Calu3 (cell line): ENCODE measurements at regions of chr18 and their contacts with region 1.

Region 1: GRCh38 chr18:610214-610903 is 13.6 kb downstream of the CLUL1 start:
- DNase-seq: no peak
- H3K4me3 Mint-ChIP-seq: no peak overlapping the region
- H3K27ac Mint-ChIP-seq: no peak overlapping the region
- H3K4me1 Mint-ChIP-seq: no peaks in the 10 kb centered on the region
- H3K27me3 Mint-ChIP-seq: peaks cover 25% of the 10 kb centered on the region
- CTCF ChIP-seq: no peak

Region 2: GRCh38 chr18:484749-485464 is 125.5 kb before region 1 on chr18:
- CTCF ChIA-PET with region 1: no interaction called
- intact Hi-C with region 1: loop called (anchors 5 kb)
- DNase-seq: no peak
- H3K4me3 Mint-ChIP-seq: no peak overlapping the region
- H3K27ac Mint-ChIP-seq: no peak overlapping the region
- H3K4me1 Mint-ChIP-seq: peaks cover 40% of the 10 kb centered on the region
- H3K27me3 Mint-ChIP-seq: peaks cover 12% of the 10 kb centered on the region
- CTCF ChIP-seq: no peak

Region 3: GRCh38 chr18:574865-575645 is 35.3 kb before region 1 on chr18:
- CTCF ChIA-PET with region 1: no interaction called
- intact Hi-C with region 1: no loop called
- DNase-seq: no peak
- H3K4me3 Mint-ChIP-seq: no peak overlapping the region
- H3K27ac Mint-ChIP-seq: no peak overlapping the region
- H3K4me1 Mint-ChIP-seq: no peaks in the 10 kb centered on the region
- H3K27me3 Mint-ChIP-seq: peaks cover 63% of the 10 kb centered on the region
- CTCF ChIP-seq: no peak